ENCODE measurements at regions of chr7 and their contacts with region 1.

Region 1: GRCh38 chr7:117750612-117751563 is 122.4 kb downstream of the CTTNBP2 start:
- DNase-seq: no peak
- H3K4me3 ChIP-seq: no peak overlapping the region
- H3K27ac ChIP-seq: no peak overlapping the region
- H3K4me1 ChIP-seq: no peaks in the 10 kb centered on the region
- H3K27me3 ChIP-seq: no peaks in the 10 kb centered on the region
- CTCF ChIP-seq: peak in 5 of 6 experiments; percentile 44 to 69 (median 57)
- POLR2A ChIP-seq: no peak

Region 2: DNA sequence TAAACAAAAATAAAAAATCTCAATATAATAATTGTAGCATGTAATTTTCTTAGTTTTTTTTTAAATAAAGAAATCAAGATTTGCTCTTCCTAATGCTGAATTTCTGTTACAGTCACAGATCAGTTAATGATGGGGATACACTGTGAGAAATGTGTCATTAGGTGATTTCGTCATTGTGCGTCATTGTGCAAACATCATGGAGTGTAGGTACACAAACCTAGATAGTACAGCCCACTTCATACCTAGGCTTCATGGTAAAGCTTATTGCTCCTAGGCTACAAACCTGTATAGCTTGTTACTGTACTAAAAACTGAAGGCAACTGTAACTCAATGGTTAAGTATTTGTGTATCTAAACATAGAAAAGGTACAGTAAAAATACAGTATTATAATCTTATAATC is 358.7 kb after region 1 on chr7:
- intact Hi-C with region 1: loop called (anchors 10 kb)
- DNase-seq: no peak
- H3K4me3 ChIP-seq: no peak overlapping the region
- H3K27ac ChIP-seq: no peak overlapping the region
- H3K4me1 ChIP-seq: peaks cover 0 to 4% (median 0%) of the 10 kb centered on the region in 3 donors
- H3K27me3 ChIP-seq: no peaks in the 10 kb centered on the region
- CTCF ChIP-seq: no peak
- POLR2A ChIP-seq: no peak

Measured in esophagus squamous epithelium (tissue), 5 donors.